ENCODE measurements at regions of chr2 and their contacts with region 1.

Region 1: GRCh38 chr2:127526149-127527000 is at the start of gene IWS1:
- DNase-seq: peak; percentile 93 to 94
- ATAC-seq: peak; percentile 94 to 97
- H3K4me3 ChIP-seq: peak within 1 kb of the TSS; percentile 87 to 97 (median 92)
- H3K27ac ChIP-seq: peak within 1 kb of the TSS; percentile 94 to 97 (median 96)
- H3K4me1 ChIP-seq: peaks cover 19 to 34% of the 10 kb centered on the region in 2 donors
- H3K27me3 ChIP-seq: no peaks in the 10 kb centered on the region
- CTCF ChIP-seq: peak; percentile 6 to 56 (median 53)
- POLR2A ChIP-seq: peak; percentile 88 to 92
- total RNA-seq, gene IWS1: 50.5 to 77.0 (median 65.3) TPM

Region 2: GRCh38 chr2:127332335-127332734 is 194.0 kb before region 1 on chr2:
- in situ Hi-C with region 1: no loop called
- intact Hi-C with region 1: no loop called
- DNase-seq: no peak
- ATAC-seq: peak in 1 of 2 donors; percentile 74
- H3K4me3 ChIP-seq: no peak overlapping the region
- H3K27ac ChIP-seq: peak overlapping the region in 3 of 4 donors; percentile 19 to 42 (median 27)
- H3K4me1 ChIP-seq: no peaks in the 10 kb centered on the region
- H3K27me3 ChIP-seq: no peaks in the 10 kb centered on the region
- CTCF ChIP-seq: no peak
- POLR2A ChIP-seq: no peak

Region 3: DNA sequence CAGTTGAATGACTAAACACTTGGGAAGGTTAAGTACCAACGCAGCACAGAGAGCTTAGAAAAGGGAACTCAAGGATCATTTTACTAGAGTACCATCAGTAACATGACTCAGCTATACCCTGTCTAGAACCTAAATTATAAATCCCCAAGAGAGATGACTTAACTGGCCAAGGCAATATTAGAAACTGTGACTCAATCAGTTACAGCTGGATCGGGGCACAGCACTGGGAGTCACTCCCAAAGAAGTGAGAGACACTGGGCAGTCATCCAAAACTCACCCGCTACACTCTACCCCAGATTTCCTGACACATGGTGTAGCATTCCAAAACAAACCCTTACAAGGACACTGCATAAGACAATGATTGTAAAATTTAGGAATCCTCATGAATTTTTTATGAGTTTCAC is 17.7 kb before region 1 on chr2:
- in situ Hi-C with region 1: no loop called
- intact Hi-C with region 1: loop called (anchors 2 kb)
- DNase-seq: peak; percentile 87 to 89
- ATAC-seq: peak; percentile 92 to 98
- H3K4me3 ChIP-seq: no peak overlapping the region
- H3K27ac ChIP-seq: peak overlapping the region; percentile 88 to 92 (median 90)
- H3K4me1 ChIP-seq: peaks cover 65% of the 10 kb centered on the region in 2 donors
- H3K27me3 ChIP-seq: no peaks in the 10 kb centered on the region
- CTCF ChIP-seq: no peak
- POLR2A ChIP-seq: no peak

Region 4: DNA sequence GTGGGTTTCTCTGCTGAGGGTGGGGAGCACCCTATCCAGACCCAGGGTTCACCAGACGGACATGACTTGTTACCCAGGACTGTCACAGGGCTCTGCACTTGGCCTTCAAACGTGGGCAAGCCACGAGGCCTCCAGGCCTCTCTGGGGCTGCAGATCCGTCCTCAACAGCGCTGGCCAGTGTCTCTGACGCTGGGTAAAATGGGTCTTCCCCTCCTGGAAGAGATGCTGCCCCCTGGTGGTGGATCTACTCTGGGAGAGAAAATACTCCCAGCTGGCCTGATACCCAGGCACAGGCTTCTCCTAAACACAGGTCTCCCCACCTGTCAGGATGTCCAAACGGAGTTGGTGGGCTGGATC is 123.3 kb after region 1 on chr2:
- in situ Hi-C with region 1: no loop called
- intact Hi-C with region 1: loop called (anchors 1 kb)
- DNase-seq: peak; percentile 66 to 67
- ATAC-seq: peak; percentile 81 to 91
- H3K4me3 ChIP-seq: no peak overlapping the region
- H3K27ac ChIP-seq: peak overlapping the region; percentile 29 to 67 (median 59)
- H3K4me1 ChIP-seq: peaks cover 15 to 28% of the 10 kb centered on the region in 2 donors
- H3K27me3 ChIP-seq: no peaks in the 10 kb centered on the region
- CTCF ChIP-seq: peak; percentile 62 to 88 (median 82)
- POLR2A ChIP-seq: no peak

Region 5: GRCh38 chr2:127810619-127811396 is 284.4 kb after region 1 on chr2 and contains the start of gene WDR33:
- in situ Hi-C with region 1: no loop called
- intact Hi-C with region 1: loop called (anchors 1 kb)
- DNase-seq: peak; percentile 80 to 90
- ATAC-seq: peak; percentile 95 to 96
- H3K4me3 ChIP-seq: peak within 1 kb of the TSS; percentile 70 to 89 (median 88)
- H3K27ac ChIP-seq: peak within 1 kb of the TSS; percentile 86 to 97 (median 93)
- H3K4me1 ChIP-seq: peaks cover 34 to 48% of the 10 kb centered on the region in 2 donors
- H3K27me3 ChIP-seq: no peaks in the 10 kb centered on the region
- CTCF ChIP-seq: peak in 2 of 5 experiments; percentile 15 to 19
- POLR2A ChIP-seq: peak; percentile 76 to 79
- total RNA-seq, gene WDR33: 13.6 to 31.4 (median 20.6) TPM